ENCODE measurements at regions of chr15 and their contacts with region 1.

Region 1: DNA sequence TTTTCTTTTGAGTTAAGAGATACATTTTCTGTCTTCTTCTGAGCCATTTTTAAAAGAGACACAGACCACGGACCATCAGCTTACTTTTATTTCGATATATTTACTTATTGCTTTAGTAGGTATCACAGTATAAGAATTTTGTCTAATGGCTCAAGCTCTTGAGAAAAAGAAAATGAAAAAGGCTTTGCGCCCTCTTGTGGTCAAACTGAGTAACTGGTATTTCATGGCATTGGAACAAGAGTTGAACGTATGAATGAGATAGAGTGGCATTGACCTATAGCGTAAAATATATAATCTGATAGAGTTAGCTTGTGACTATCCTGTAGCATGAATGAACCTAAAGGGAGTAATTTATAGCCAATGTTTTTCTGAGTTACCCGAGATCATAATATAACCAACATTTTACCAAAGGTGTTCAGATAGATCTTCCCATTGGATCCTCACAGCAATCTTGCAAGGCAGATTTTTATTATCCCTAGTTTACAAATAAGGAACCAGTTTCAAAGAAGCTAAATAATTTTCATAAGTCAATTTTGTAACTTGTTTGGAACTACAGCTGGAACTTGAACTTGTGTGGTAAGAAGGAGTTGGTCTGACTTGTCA is 154.6 kb downstream of the POLR2M start:
- DNase-seq: peak; percentile 37
- H3K4me3 ChIP-seq: no peak overlapping the region
- H3K27ac ChIP-seq: no peak overlapping the region
- H3K4me1 ChIP-seq: no peaks in the 10 kb centered on the region
- H3K27me3 ChIP-seq: no peaks in the 10 kb centered on the region
- CTCF ChIP-seq: peak; percentile 68 to 94 (median 90)
- POLR2A ChIP-seq: no peak

Region 2: GRCh38 chr15:57667171-57667849 is 193.8 kb before region 1 on chr15:
- intact Hi-C with region 1: loop called (anchors 5 kb)
- DNase-seq: peak; percentile 40
- H3K4me3 ChIP-seq: no peak overlapping the region
- H3K27ac ChIP-seq: no peak overlapping the region
- H3K4me1 ChIP-seq: peaks cover 10% of the 10 kb centered on the region
- H3K27me3 ChIP-seq: no peaks in the 10 kb centered on the region
- CTCF ChIP-seq: peak in 3 of 4 experiments; percentile 39 to 59 (median 51)
- POLR2A ChIP-seq: no peak

Region 3: DNA sequence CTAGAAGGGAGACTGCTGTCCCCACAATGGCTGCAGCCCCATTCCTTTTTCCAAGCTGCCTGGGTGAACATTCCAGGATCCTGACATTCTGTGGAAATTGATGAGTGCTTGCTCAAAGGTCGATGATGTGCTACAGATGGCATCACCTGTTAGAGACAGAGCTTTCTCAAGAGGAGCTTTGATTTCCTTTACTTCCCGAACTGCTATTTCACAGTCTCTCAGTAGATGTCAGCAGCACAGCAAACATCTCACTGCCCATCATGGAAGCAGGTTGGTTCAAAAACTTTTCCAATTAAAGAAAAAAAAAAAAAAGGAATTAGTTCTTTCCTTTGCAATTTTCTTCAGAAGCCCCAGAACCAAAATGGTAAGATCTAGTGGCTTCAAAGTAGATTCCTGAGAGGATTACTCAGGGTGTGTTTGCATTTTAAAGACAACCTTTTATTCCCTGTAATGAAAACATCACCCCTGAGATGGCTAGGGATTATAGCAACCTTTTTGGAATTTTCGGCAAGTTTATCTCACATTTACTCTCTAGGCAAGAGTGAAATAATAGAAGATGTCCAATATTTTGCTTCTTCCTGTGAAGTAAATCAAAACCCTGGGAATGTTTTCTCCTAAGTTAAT is 109.8 kb before region 1 on chr15:
- intact Hi-C with region 1: loop called (anchors 2 kb)
- DNase-seq: no peak
- H3K4me3 ChIP-seq: no peak overlapping the region
- H3K27ac ChIP-seq: no peak overlapping the region
- H3K4me1 ChIP-seq: no peaks in the 10 kb centered on the region
- H3K27me3 ChIP-seq: no peaks in the 10 kb centered on the region
- CTCF ChIP-seq: peak in 2 of 4 experiments; percentile 44 to 50
- POLR2A ChIP-seq: no peak

Region 4: DNA sequence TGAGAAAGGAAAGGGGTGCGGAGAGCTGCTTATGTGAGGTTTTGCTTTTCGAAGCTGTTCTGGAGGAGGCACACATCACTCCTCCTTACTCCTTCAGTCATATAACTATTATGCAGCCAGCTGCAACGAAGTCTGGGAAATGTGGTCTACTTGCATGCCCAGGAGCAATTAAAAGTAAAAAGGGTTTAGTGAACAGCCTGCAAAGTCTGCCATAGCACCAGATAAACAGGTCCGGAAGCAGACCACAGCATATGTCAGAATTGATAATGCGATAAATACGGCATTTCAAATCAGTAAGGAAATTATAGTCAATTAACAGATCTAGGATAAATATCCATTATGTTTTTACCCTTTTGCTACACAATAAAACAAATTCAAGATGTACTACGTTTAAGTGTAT is 55.1 kb before region 1 on chr15:
- intact Hi-C with region 1: no loop called
- DNase-seq: no peak
- H3K4me3 ChIP-seq: no peak overlapping the region
- H3K27ac ChIP-seq: no peak overlapping the region
- H3K4me1 ChIP-seq: no peaks in the 10 kb centered on the region
- H3K27me3 ChIP-seq: no peaks in the 10 kb centered on the region
- CTCF ChIP-seq: no peak
- POLR2A ChIP-seq: no peak

Region 5: DNA sequence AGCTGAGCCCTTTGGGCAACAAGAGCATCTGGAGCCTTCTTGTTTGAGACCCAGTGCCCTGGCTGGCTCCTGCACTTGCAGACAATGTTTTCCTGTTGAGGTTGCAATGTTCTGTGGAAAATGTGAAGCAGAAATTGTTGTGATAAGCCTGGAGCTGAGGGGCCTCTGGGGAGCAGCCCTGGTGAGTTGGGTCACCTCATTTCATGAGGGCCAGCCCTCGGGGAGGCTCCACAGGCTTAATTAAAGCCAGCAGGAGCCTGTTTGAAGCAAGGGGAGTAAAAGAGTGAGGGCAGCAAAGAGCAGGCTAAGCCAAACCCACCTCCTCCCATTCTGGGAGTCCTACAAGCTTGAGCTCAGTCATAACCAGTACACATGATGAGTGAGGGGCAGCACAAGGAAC is 50.1 kb after region 1 on chr15:
- intact Hi-C with region 1: no loop called
- DNase-seq: no peak
- H3K4me3 ChIP-seq: no peak overlapping the region
- H3K27ac ChIP-seq: no peak overlapping the region
- H3K4me1 ChIP-seq: no peaks in the 10 kb centered on the region
- H3K27me3 ChIP-seq: no peaks in the 10 kb centered on the region
- CTCF ChIP-seq: no peak
- POLR2A ChIP-seq: no peak

Region 6: GRCh38 chr15:58146749-58147148 is 285.6 kb after region 1 on chr15:
- intact Hi-C with region 1: no loop called
- DNase-seq: no peak
- H3K4me3 ChIP-seq: no peak overlapping the region
- H3K27ac ChIP-seq: no peak overlapping the region
- H3K4me1 ChIP-seq: no peaks in the 10 kb centered on the region
- H3K27me3 ChIP-seq: no peaks in the 10 kb centered on the region
- CTCF ChIP-seq: no peak
- POLR2A ChIP-seq: no peak